Activated B cell treated with CpG ODN at 0.5 μM for 24 hours (primary cell): ENCODE measurements at regions of chr12 and their contacts with region 1.

Region 1: DNA sequence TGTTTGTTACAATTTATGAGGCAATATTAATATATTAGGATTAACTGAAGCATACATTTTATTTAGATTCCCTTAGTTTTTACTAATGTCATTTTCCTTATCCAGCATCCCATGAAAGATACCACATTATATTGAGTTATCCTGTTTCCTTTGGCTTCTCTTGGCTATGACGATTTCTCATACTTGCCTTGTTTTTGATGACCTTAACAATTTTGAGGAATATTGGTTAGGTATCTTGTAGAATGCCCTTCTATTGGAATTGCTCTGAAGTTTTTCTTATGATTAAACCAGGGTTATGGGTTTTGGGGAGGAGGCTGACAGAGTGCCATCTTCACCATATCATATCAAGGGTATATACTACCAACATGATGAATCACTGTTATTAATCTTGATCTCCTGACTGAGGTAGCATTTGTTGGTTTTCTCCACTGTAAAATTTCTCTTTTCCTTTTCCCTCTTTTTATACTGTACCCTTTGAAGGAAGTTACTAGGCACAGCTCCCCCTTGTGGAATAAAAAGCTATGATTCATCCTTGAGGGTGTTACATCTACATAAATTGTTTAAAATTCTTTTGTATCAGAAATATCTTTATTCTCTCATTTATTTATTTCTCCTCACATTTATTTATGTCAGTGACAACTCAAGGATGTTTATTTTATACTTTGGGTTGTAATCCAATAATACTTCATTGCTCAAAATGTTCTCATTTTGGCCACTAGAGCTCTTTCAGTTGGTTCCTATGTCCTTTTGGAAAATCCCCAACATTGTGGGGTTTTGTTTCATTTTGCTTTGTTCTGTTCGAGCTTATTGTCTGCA is 239.0 kb downstream of the SLC16A7 start:
- DNase-seq: no peak
- ATAC-seq: no peak
- H3K4me3 Mint-ChIP-seq: no peak overlapping the region
- H3K27ac Mint-ChIP-seq: no peak overlapping the region
- H3K4me1 Mint-ChIP-seq: no peaks in the 10 kb centered on the region
- H3K27me3 Mint-ChIP-seq: no peaks in the 10 kb centered on the region
- CTCF ChIP-seq: peak; percentile 72

Region 2: DNA sequence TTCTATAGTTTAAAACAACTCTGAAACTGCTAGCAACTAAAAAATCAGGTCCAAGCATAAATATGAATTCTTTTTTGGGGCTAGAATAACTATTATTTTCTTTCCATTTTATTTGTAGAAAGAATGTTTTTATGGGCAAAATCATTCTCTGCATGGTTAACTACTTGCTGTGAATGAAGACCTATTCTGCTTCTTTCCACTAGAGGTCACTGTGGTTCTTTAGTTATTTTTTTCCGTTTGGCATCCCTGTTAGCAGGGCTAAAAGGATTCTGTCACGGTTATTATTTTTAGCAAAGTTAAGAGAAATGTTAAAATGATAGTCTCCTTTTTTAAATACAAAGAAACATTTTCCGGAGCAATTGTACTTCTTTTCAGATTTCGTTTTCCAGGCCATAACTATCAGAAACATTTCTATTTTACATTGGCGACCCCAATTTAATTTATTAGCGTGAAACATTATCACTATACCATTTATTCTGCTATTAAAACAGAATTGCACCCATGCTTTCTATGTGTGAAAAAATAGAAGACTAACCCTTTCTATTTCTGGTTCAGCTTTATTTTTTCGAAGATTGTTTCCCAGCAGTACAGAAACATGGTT is 1488.7 kb before region 1 on chr12:
- CTCF ChIA-PET with region 1: no interaction called
- POLR2A ChIA-PET with region 1: no interaction called
- intact Hi-C with region 1: loop called (anchors 5 kb)
- DNase-seq: no peak
- ATAC-seq: no peak
- H3K4me3 Mint-ChIP-seq: no peak overlapping the region
- H3K27ac Mint-ChIP-seq: no peak overlapping the region
- H3K4me1 Mint-ChIP-seq: peaks cover 6% of the 10 kb centered on the region
- H3K27me3 Mint-ChIP-seq: peaks cover 4% of the 10 kb centered on the region
- CTCF ChIP-seq: peak; percentile 95

Region 3: DNA sequence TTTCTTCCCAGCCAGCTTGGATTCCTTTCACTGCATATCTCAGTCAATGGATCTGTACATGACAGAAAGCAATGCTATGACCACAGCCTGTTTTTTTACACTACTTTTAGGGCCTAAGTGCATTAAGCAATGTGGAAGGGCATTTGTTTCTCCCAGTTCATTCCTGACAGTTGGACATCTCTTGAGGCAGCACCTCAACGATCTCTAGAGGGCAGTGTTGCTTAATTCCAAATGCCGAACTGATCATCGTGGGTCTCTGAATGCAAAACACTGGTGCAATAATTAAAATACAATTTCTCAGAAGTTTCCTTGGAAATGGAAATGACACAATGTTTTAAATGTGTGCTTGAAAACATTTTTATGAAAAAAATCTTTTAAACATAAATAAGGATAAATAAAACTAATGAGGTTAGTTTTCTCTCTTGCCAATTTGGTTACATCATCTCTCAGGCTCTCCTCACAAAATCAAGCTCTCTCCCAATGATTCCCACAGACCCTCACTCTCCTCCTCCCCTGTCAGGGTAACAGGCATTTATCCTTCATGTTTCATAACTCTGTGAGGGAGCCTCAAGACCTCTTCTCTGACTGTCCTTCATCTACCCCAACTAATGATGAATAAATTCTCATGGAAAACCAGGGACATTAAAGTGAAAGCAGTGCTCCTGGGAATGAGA is 431.5 kb before region 1 on chr12:
- CTCF ChIA-PET with region 1: interaction called, 12 read pairs
- POLR2A ChIA-PET with region 1: no interaction called
- intact Hi-C with region 1: loop called (anchors 1 kb)
- DNase-seq: no peak
- ATAC-seq: peak; percentile 45
- H3K4me3 Mint-ChIP-seq: no peak overlapping the region
- H3K27ac Mint-ChIP-seq: no peak overlapping the region
- H3K4me1 Mint-ChIP-seq: no peaks in the 10 kb centered on the region
- H3K27me3 Mint-ChIP-seq: peaks cover 2% of the 10 kb centered on the region
- CTCF ChIP-seq: no peak

Region 4: GRCh38 chr12:59431266-59431665 is 403.6 kb before region 1 on chr12:
- CTCF ChIA-PET with region 1: interaction called, 3 read pairs
- POLR2A ChIA-PET with region 1: no interaction called
- intact Hi-C with region 1: loop called (anchors 10 kb)
- DNase-seq: no peak
- ATAC-seq: no peak
- H3K4me3 Mint-ChIP-seq: no peak overlapping the region
- H3K27ac Mint-ChIP-seq: no peak overlapping the region
- H3K4me1 Mint-ChIP-seq: no peaks in the 10 kb centered on the region
- H3K27me3 Mint-ChIP-seq: no peaks in the 10 kb centered on the region
- CTCF ChIP-seq: no peak